Activated CD4-positive, alpha-beta memory T cell treated with anti-CD3 and anti-CD28 coated beads for 36 hours (primary cell): ENCODE measurements at regions of chr6 and their contacts with region 1.

Region 1: DNA sequence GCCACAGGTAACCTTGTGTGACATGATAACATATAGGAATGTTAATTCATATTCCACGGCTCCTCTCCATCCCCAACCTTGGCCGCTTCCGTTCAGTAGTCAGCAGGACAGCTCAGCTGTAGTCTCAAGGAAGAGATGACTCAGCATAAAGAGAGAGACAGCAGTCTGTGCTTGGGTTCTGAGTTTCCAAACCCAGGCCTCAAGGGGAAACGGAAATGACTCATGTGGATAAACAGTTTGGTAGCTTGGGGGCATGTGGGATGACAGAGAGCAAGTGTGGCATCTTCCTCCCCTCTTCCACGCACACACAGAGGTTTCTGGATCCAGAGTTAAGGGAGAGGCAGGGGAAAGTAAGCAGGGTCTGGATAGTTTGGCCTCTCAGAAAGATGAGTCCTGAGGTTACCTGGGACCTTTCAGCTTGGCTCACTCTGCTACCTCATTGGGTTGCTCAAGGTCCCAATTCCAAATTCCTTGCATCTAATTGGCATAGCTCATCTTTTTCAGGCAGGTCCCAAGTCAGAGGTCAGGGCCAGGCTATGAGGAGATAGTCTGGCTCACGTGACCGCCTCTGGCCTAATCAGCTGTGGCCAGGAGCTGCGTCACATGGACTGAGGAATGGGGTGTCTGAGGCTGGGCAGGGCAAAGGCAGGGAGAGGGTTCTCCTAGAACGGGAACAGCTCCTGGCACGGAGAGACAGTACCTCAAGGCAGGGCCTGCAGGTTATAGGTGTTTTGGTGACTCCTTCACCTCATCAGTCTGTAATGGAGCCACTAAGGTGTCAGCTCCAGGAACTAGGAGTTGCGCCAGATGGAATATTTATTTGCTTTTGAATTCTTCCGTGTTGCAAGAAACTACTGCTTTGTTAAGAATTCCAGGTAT is 36.5 kb upstream of the MLN start:
- DNase-seq: peak; percentile 76
- H3K4me3 Mint-ChIP-seq: no peak overlapping the region
- H3K27ac Mint-ChIP-seq: peak overlapping the region; percentile 59
- H3K4me1 Mint-ChIP-seq: peaks cover 18% of the 10 kb centered on the region
- H3K27me3 Mint-ChIP-seq: peaks cover 1% of the 10 kb centered on the region

Region 2: GRCh38 chr6:33410050-33410710 is 430.1 kb before region 1 on chr6:
- CTCF ChIA-PET with region 1: no interaction called
- POLR2A ChIA-PET with region 1: no interaction called
- intact Hi-C with region 1: no loop called
- DNase-seq: peak; percentile 98
- H3K4me3 Mint-ChIP-seq: peak overlapping the region; percentile 84
- H3K27ac Mint-ChIP-seq: peak overlapping the region; percentile 91
- H3K4me1 Mint-ChIP-seq: peaks cover 45% of the 10 kb centered on the region
- H3K27me3 Mint-ChIP-seq: no peaks in the 10 kb centered on the region

Region 3: DNA sequence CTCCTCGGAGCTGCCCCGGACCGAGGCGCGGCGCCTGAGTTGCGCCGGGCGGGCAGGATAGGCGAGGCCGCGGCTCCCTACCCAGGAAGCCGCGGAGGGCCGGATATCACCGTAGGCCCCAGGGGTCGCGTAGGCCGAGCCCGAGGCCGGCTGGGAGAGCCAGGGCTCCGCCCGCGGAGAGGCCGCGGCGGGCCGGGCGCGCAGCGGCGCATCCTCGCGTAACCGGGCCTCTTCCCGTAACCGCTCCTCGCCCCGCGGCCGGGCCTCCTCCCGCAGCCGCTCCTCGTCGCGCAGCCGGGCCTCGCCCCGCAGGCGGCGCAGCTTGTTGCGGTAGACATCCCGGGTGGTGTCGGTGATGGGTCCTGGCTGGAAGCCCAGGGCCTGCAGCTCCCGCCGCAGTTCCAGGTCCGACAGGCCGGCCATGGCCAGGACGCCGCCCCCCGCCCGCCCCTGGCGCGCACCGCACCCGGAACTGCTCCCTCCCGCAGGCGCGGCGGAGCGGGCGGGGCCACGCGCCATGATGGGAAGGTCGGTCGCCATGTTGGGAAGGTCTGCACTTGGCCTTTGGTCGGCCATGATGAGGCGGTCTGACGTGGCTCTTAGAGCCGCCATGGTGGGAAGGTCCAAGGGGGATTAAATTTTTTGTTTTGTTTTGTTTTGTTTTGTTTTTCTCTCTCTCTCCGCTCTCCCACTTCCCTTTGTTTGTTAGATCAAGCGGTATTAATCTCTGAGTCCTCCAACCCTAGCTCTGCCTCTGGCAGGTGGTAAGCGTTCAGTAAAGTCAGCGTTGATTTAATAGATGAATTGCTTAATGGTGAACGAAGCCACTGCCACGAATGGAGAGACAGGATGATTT is 51.4 kb before region 1 on chr6 and contains the start of gene LEMD2:
- CTCF ChIA-PET with region 1: interaction called, 3 read pairs
- POLR2A ChIA-PET with region 1: interaction called, 5 read pairs
- intact Hi-C with region 1: loop called (anchors 2 kb)
- DNase-seq: peak; percentile 95
- H3K4me3 Mint-ChIP-seq: peak within 1 kb of the TSS; percentile 96
- H3K27ac Mint-ChIP-seq: peak within 1 kb of the TSS; percentile 97
- H3K4me1 Mint-ChIP-seq: peaks cover 42% of the 10 kb centered on the region
- H3K27me3 Mint-ChIP-seq: no peaks in the 10 kb centered on the region
- total RNA-seq, gene LEMD2: 51.4 to 54.8 TPM